Posterior cingulate gyrus (tissue), 11 donors: ENCODE measurements at regions of chr19 and their contacts with region 1.

Region 1: GRCh38 chr19:56393119-56394012 is at the start of gene ZNF582:
- DNase-seq: peak; percentile 89 to 99 (median 94)

Region 2: DNA sequence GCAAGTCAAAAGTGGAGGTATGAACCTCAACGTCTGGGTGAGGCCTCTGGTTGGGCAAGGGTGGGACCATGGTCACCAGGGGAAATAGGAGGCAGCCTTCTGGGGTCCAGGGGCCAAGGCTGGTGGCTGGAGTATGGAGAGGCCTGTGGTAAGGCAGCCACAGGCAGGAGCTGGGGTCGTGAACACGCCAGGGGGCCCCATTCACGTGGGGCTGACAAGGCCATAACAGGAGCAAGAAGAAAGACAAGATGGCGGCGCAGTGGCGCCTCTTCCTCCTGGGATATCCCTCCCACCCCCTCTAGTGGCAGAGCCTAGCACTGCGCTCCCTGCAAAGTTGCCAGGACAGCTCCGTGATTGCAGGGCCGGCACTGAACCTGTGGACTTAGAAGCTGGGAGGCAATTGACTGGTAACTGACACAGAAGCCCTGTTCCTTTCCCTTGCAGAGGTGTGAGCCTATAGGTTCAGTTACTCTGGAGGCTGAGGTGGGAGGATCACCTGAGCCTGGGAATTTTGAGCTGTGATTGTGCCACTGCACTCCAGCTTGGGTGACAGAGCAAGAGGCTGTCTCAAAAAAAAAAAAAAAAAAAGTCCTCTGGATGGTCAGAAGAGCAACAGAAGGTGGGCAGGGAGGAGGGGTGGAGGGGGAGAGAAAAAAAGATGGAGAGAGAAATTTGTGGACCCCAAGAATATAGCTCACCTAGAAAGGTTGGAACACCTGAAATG is 140.5 kb before region 1 on chr19:
- intact Hi-C with region 1: loop called (anchors 10 kb)
- DNase-seq: peak; percentile 13 to 90 (median 56)

Region 3: DNA sequence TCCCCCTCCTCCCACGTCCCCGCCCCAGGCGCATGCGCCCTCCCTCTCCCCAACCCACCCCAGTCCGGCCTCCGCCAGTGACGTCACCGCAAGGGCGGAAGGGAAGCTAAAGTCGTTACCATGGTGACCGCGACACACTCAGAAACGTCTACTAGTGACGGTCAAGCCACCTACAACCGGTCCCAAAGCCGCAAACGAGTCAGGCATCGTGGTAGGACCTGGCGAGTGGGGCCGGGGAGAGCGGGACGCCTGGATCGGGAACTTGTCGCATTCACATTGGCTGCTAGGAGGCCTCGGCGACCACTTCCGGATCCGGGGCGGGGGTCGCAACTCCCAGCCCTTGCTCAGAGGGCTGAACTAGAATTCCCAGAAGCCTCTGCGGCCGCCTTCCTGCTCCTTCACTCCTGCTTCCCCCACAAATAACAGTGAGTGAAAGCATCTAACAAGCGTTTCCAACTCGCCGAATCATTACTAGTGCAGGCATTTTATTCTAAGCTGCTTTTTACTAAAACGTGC is 78.7 kb before region 1 on chr19 and contains the start of gene ZSCAN5A:
- intact Hi-C with region 1: loop called (anchors 10 kb)
- DNase-seq: peak; percentile 96 to 99 (median 98)

Region 4: GRCh38 chr19:56356944-56357343 is 36.4 kb before region 1 on chr19:
- intact Hi-C with region 1: no loop called
- DNase-seq: no peak

Region 5: GRCh38 chr19:56403764-56404704 is 10.7 kb after region 1 on chr19 and contains the start of gene ZNF583:
- intact Hi-C with region 1: loop called (anchors 1 kb)
- DNase-seq: peak; percentile 91 to 99 (median 94)

Region 6: DNA sequence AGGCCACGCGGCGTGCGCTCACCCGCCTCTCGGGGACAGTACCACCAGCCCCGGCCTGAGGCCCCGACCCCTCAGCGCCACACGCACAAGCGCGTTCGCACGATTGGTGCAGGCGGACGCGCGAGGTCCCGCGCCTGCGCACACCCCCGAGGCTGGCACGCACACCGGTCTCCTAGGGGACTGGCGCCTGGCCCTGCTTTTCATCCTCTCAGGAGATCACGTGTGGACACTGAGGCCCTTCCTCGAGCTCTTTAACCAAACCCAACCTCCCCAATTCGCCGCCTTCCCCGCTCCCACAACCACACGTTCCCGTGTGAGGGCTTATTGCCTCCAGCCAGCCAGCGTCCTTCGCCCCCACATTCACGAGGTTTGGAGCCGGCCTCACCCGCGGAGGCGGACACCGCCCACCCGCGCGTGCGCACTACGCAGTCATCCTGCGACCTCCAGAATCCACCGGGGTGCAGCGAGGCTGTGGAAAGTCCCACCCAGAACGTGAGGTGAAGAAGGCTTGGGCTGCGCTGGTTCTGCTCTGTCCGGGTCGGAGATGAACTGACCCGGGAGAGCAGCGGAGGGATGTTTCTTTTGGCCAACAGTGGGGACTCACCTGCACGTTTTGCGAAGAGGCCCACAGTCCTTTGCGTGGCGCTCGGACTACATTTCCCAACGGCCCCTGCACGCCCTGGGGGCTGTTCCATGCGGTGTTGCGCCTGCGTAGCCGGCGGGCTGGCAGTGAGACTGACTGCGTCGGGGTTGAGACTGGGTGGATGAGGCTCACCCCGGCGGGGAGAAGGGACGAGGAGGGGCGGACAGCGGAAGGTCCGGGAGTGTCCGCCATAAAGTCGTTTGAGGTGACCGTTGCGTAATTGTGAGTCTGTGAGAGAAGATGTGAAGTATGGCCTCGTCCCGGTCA is 84.3 kb after region 1 on chr19:
- intact Hi-C with region 1: loop called (anchors 5 kb)
- DNase-seq: peak; percentile 88 to 98 (median 93)

Region 7: DNA sequence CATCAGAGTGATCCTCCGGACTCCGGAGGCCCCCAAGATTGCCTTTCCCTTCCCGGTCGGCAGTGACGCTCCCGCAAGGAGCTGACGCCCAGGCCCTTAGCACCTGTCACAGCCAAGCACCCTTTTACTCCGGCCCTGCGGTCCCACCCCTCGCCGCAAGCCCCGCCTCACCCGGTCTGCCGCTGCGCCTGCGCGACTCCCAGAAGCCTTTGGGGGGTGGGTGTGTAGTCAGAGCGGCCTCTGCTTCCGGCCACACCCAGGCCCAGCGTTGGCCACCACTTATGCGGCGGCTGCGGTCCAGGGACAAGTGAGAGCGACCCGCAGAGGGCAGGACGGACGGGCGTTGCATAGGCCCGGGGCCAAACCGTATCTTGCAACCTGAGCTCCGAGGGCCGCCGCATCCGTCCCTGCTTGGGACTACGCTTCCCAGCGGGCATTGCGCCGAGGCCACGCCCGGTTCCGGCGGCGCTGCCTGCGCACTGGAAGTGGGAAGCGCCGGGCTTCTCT is 144.9 kb after region 1 on chr19:
- intact Hi-C with region 1: loop called (anchors 10 kb)
- DNase-seq: peak; percentile 92 to 99 (median 96)

Region 8: DNA sequence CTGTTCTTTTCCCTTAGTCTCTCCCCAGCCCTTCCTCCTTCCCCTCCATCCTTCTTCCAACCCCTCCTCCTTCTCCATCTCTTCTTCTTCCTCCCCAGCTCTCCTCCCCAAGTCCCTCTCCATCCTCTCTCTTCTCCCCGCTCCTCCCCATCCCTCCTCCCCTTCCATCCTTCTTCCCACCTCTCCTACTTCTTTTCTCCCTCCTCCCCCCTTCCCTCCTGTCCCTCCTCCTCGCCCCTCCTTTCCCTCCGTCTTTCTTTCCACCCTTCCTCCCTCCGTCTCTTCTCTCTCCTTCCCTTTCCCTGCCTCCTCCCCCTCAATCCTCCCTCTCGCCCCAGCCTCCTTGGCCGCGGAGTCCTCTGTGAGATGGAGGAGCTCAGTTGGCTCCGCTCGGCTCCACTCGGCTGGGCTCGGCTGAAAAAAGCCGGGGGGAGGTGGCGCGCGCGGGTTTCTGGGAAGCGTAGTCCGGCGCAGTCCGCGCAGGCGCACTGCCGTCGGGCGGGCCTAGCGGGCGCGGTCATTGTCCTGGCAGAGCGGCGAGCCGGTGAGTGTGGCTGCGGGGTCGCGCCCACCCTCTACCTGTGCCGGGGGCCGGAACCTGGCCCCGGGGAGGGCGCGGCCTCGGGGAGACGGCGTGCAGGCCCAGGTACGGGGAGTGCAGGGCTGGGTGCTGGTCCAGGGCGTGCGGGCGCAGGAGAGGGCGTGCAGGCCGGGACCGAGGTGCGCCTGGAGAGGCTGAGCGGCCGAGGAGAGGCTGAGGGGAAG is 201.6 kb after region 1 on chr19 and contains the start of gene ZNF71:
- intact Hi-C with region 1: loop called (anchors 10 kb)
- DNase-seq: peak; percentile 82 to 98 (median 86)